Transverse colon (tissue), 4 donors: ENCODE measurements at regions of chr12 and their contacts with region 1.

Region 1: GRCh38 chr12:122635471-122635870 is 67.7 kb downstream of the HCAR2 start:
- DNase-seq: no peak
- H3K4me3 ChIP-seq: no peak overlapping the region
- H3K27ac ChIP-seq: no peak overlapping the region
- H3K4me1 ChIP-seq: no peaks in the 10 kb centered on the region
- H3K27me3 ChIP-seq: no peaks in the 10 kb centered on the region
- CTCF ChIP-seq: no peak
- EP300 ChIP-seq: no peak
- POLR2A ChIP-seq: no peak

Region 2: GRCh38 chr12:121181181-121181580 is 1454.3 kb before region 1 on chr12:
- in situ Hi-C with region 1: no loop called
- intact Hi-C with region 1: loop called (anchors 5 kb)
- DNase-seq: no peak
- H3K4me3 ChIP-seq: no peak overlapping the region
- H3K27ac ChIP-seq: no peak overlapping the region
- H3K4me1 ChIP-seq: no peaks in the 10 kb centered on the region
- H3K27me3 ChIP-seq: no peaks in the 10 kb centered on the region
- CTCF ChIP-seq: no peak
- EP300 ChIP-seq: no peak
- POLR2A ChIP-seq: no peak

Region 3: DNA sequence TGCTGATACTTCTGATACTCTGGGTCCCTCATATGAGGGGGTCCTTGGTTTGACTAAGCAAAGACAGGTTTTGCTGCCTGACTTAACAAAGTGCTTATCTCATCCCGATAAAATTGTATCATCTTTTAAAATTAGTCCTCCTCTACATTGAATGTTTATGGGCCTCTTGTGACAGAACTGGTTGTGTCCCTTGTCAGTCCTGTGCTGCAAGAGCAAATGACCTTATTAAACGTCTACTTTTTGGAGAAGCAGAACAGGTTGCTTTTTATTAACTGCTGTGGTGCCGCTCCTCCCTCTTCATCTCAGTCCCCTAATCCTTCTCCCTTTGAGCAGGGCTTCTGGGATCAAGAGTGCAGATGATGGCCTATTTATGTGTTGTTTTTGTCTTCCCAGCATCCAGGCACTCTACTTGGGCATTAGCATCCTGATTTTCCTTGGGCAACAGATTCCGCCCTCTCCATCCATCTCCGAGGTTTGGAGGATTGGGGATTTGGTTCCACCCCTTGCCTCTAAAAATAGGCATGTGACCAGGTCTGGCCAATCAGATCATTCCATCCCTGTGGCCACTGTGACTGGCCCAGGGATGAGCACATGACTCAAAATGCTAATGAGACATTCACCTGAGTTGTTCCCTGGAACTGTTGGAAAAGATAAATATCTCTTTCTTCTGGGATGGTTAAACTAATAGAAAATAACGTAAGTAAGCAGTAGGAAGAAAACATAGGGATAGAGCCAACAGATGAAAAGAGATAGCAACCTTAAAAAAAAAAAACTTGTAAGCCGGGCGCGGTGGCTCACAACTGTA is 114.3 kb after region 1 on chr12:
- in situ Hi-C with region 1: loop called in 3 of 4 experiments (anchors 5 kb)
- intact Hi-C with region 1: no loop called
- DNase-seq: no peak
- H3K4me3 ChIP-seq: no peak overlapping the region
- H3K27ac ChIP-seq: no peak overlapping the region
- H3K4me1 ChIP-seq: peaks cover 9 to 22% (median 12%) of the 10 kb centered on the region in 4 donors
- H3K27me3 ChIP-seq: no peaks in the 10 kb centered on the region
- CTCF ChIP-seq: no peak
- EP300 ChIP-seq: no peak
- POLR2A ChIP-seq: no peak

Region 4: GRCh38 chr12:122860346-122861090 is 225.0 kb after region 1 on chr12:
- in situ Hi-C with region 1: no loop called
- intact Hi-C with region 1: no loop called
- DNase-seq: peak; percentile 91
- H3K4me3 ChIP-seq: no peak overlapping the region
- H3K27ac ChIP-seq: peak overlapping the region; percentile 11 to 47 (median 30)
- H3K4me1 ChIP-seq: peaks cover 12 to 34% (median 22%) of the 10 kb centered on the region in 4 donors
- H3K27me3 ChIP-seq: no peaks in the 10 kb centered on the region
- CTCF ChIP-seq: peak; percentile 94 to 96 (median 96)
- EP300 ChIP-seq: no peak
- POLR2A ChIP-seq: no peak